ENCODE measurements at regions of chr19 and their contacts with region 1.

Region 1: GRCh38 chr19:55339048-55339888 is at the start of gene KMT5C:
- DNase-seq: peak; percentile 100
- H3K4me3 Mint-ChIP-seq: peak within 1 kb of the TSS; percentile 91
- H3K27ac Mint-ChIP-seq: peak within 1 kb of the TSS; percentile 97
- H3K4me1 Mint-ChIP-seq: peaks cover 16% of the 10 kb centered on the region
- H3K27me3 Mint-ChIP-seq: peaks cover 11% of the 10 kb centered on the region
- total RNA-seq, gene KMT5C: 31.3 and 32.2 TPM in 2 replicates

Region 2: GRCh38 chr19:55041617-55042349 is 297.5 kb before region 1 on chr19:
- intact Hi-C with region 1: no loop called
- DNase-seq: peak; percentile 82
- H3K4me3 Mint-ChIP-seq: peak overlapping the region; percentile 85
- H3K27ac Mint-ChIP-seq: peak overlapping the region; percentile 88
- H3K4me1 Mint-ChIP-seq: peaks cover 21% of the 10 kb centered on the region
- H3K27me3 Mint-ChIP-seq: no peaks in the 10 kb centered on the region

Region 3: GRCh38 chr19:55117636-55118391 is 221.5 kb before region 1 on chr19 and contains the start of gene PPP1R12C:
- intact Hi-C with region 1: loop called (anchors 1 kb)
- DNase-seq: peak; percentile 99
- H3K4me3 Mint-ChIP-seq: peak within 1 kb of the TSS; percentile 94
- H3K27ac Mint-ChIP-seq: peak within 1 kb of the TSS; percentile 91
- H3K4me1 Mint-ChIP-seq: peaks cover 28% of the 10 kb centered on the region
- H3K27me3 Mint-ChIP-seq: peaks cover 10% of the 10 kb centered on the region
- total RNA-seq, gene PPP1R12C: 103 and 104 TPM in 2 replicates

Region 4: GRCh38 chr19:55206664-55207500 is 132.4 kb before region 1 on chr19:
- intact Hi-C with region 1: no loop called
- DNase-seq: peak; percentile 78
- H3K4me3 Mint-ChIP-seq: peak overlapping the region; percentile 34
- H3K27ac Mint-ChIP-seq: peak overlapping the region; percentile 9
- H3K4me1 Mint-ChIP-seq: peaks cover 3% of the 10 kb centered on the region
- H3K27me3 Mint-ChIP-seq: peaks cover 19% of the 10 kb centered on the region

Region 5: DNA sequence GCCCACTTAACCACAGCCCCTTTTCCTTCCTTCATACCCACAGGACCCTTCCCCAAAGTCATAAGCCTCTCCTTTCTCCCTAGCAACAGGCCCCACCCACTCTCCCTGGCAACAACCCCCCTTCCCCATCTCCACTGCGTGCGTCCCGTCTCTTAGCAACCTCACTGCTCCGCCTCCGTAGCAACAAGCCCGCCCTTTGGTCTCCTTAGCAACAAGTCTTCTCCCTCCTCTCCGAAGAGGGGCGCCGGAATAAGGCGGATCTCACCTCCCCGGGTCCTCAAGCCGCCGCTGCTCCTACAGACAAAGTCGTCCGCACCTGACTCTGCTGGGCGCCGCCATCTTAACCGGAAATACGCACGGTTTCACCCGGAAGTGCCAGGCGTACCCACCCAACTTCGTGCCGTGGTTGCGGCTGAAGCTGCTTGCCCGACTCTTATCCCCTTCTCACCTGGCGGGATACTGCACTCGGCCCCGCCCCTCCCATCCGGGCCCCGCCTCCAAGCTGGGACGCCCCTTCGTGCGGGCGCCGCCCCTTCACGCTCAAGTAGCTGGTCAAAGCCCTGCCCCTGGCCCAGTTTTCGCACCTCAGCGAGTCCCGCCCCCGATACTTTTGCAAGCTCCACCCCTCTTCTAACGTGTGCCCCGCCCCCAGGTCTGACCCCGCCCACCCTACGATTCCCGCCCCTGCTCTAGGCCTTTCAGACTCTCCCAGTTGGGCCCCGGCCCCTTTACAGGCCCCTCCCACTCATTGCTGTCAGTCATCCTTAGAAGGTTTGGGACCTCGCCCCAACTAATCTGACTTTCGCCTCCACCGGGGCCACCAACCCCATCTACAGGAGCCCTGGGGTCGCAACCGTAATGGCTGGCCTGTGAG is 59.3 kb before region 1 on chr19 and contains the start of gene HSPBP1:
- intact Hi-C with region 1: loop called (anchors 1 kb)
- DNase-seq: peak; percentile 98
- H3K4me3 Mint-ChIP-seq: peak within 1 kb of the TSS; percentile 100
- H3K27ac Mint-ChIP-seq: peak within 1 kb of the TSS; percentile 99
- H3K4me1 Mint-ChIP-seq: peaks cover 31% of the 10 kb centered on the region
- H3K27me3 Mint-ChIP-seq: peaks cover 4% of the 10 kb centered on the region
- total RNA-seq, gene HSPBP1: 63.9 and 68.3 TPM in 2 replicates

Region 6: GRCh38 chr19:55353803-55354697 is 14.8 kb after region 1 on chr19:
- intact Hi-C with region 1: loop called (anchors 1 kb)
- DNase-seq: peak; percentile 89
- H3K4me3 Mint-ChIP-seq: peak overlapping the region; percentile 83
- H3K27ac Mint-ChIP-seq: no peak overlapping the region
- H3K4me1 Mint-ChIP-seq: peaks cover 22% of the 10 kb centered on the region
- H3K27me3 Mint-ChIP-seq: peaks cover 49% of the 10 kb centered on the region

Region 7: GRCh38 chr19:55407800-55408532 is 68.7 kb after region 1 on chr19:
- intact Hi-C with region 1: loop called (anchors 1 kb)
- DNase-seq: peak; percentile 99
- H3K4me3 Mint-ChIP-seq: peak overlapping the region; percentile 89
- H3K27ac Mint-ChIP-seq: peak overlapping the region; percentile 98
- H3K4me1 Mint-ChIP-seq: peaks cover 34% of the 10 kb centered on the region
- H3K27me3 Mint-ChIP-seq: peaks cover 7% of the 10 kb centered on the region

Region 8: DNA sequence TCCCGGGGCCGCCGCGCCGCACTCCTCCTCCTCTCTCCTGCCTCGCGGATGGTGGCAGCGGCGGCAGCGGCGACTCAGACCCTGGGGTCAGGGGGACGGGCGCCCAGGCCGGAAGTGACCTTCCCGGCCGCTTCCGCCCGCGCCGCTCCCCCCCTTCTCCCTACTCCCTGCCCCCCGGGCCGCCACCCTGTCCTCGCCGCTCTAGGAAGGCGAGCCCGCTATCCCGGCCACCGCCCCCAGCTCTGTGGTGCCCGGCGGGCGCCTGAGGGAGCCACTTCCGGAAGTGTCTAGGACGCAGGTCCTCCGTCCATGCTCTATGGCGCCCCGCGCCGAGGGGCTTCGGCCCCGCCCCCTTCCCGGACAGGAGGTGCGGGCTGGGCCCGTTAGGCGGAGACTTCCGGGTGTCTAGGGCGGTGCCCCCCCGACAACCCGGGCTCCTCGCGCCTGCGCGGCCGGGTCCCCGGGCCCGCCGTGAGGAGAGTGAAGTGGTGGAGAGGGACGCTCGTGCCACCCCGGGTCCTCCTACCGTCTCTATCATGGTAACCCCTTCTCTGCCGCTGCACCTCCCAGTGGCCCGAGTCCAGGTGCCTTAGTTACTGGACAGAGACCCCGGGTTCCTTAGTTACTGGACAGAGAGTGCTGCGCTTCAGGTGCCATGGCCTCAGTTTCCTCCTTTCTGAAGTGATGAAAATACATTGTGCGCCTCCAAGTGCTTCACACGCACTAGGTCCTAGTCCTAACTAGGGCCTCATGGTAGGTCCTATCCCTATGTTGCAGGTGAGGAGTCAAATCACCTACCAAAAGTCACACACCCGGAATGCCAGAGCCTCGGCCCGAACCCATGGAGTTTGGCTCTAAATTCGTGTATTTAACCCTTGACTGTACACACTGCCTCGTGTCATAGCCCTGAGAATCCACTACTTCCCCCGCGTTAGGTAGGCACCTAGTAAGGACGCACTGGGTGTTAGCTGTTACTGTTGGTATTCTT is 782.2 kb after region 1 on chr19 and contains the start of gene ZNF787:
- intact Hi-C with region 1: loop called (anchors 10 kb)
- DNase-seq: peak; percentile 99
- H3K4me3 Mint-ChIP-seq: peak within 1 kb of the TSS; percentile 90
- H3K27ac Mint-ChIP-seq: peak within 1 kb of the TSS; percentile 97
- H3K4me1 Mint-ChIP-seq: peaks cover 35% of the 10 kb centered on the region
- H3K27me3 Mint-ChIP-seq: peaks cover 2% of the 10 kb centered on the region
- total RNA-seq, gene ZNF787: 36.4 and 37.0 TPM in 2 replicates